IMR-90 (cell line): ENCODE measurements at regions of chr13 and their contacts with region 1.

Region 1: GRCh38 chr13:85799097-85799582 is at the start of gene SLITRK6:
- DNase-seq: peak; percentile 85
- ATAC-seq: peak; percentile 99
- H3K4me3 ChIP-seq: peak within 1 kb of the TSS; percentile 41
- H3K27ac ChIP-seq: no peak within 1 kb of the TSS
- H3K4me1 ChIP-seq: no peaks in the 10 kb centered on the region
- H3K27me3 ChIP-seq: no peaks in the 10 kb centered on the region
- CTCF ChIP-seq: peak; percentile 38; the same call in 1 of the 2 replicates
- POLR2A ChIP-seq: no peak
- RAD21 ChIP-seq: peak; percentile 41; the same call in 1 of the 2 replicates
- total RNA-seq, gene SLITRK6: 1.6 and 1.7 TPM in 2 replicates

Region 2: DNA sequence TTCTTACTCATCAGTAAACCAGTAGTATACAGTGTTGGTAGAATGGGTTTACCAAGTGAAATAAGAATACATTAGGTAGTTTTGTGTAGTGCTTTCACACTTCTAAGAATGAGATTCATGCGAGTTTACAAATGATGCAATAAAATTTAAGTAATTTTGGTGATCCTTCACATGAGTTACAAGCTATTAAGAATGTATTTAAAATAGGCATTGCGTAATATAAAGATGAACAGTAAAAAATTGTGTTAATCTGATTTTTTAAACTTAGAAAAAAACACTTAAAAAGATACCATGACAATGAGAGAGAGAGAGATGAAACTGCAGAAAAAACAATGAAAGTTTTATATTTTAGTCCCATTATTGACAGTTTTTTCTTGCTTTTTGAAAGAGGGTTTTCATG is 570.4 kb before region 1 on chr13:
- CTCF ChIA-PET with region 1: no interaction called
- POLR2A ChIA-PET with region 1: no interaction called
- dilution Hi-C with region 1: no loop called
- in situ Hi-C with region 1: no loop called
- intact Hi-C with region 1: loop called (anchors 5 kb)
- DNase-seq: no peak
- ATAC-seq: no peak
- H3K4me3 ChIP-seq: no peak overlapping the region
- H3K27ac ChIP-seq: no peak overlapping the region
- H3K4me1 ChIP-seq: no peaks in the 10 kb centered on the region; the same call in 1 of the 2 replicates
- H3K27me3 ChIP-seq: no peaks in the 10 kb centered on the region
- CTCF ChIP-seq: no peak
- POLR2A ChIP-seq: no peak
- RAD21 ChIP-seq: no peak

Region 3: DNA sequence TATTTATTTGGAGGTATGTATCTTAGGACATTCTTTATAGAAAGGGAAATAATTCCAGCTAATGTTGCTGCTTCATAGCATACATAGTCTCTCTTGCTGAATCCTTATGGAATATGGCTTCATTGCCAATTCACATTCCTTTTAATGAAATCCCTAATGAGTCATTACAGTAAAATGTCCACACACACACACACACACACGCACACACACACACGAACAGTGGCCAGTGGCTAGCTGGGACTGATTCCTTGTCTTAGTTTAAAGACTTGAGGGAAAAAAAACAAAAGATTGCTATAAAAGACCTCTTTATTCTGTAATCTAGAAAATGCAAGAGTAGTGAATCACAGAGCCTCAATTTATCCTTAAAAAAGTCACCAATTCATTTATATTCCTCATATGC is 301.5 kb before region 1 on chr13:
- CTCF ChIA-PET with region 1: no interaction called
- POLR2A ChIA-PET with region 1: no interaction called
- dilution Hi-C with region 1: no loop called
- in situ Hi-C with region 1: no loop called
- intact Hi-C with region 1: loop called (anchors 5 kb)
- DNase-seq: peak; percentile 97
- ATAC-seq: peak; percentile 93
- H3K4me3 ChIP-seq: no peak overlapping the region
- H3K27ac ChIP-seq: peak overlapping the region; percentile 75; the same call in 1 of the 2 replicates
- H3K4me1 ChIP-seq: 0 out of 2 replicates have a peak, but pooled peaks cover 2% of the 10 kb centered on the region
- H3K27me3 ChIP-seq: no peaks in the 10 kb centered on the region
- CTCF ChIP-seq: no peak
- POLR2A ChIP-seq: no peak
- RAD21 ChIP-seq: no peak; the same call in 1 of the 2 replicates

Region 4: DNA sequence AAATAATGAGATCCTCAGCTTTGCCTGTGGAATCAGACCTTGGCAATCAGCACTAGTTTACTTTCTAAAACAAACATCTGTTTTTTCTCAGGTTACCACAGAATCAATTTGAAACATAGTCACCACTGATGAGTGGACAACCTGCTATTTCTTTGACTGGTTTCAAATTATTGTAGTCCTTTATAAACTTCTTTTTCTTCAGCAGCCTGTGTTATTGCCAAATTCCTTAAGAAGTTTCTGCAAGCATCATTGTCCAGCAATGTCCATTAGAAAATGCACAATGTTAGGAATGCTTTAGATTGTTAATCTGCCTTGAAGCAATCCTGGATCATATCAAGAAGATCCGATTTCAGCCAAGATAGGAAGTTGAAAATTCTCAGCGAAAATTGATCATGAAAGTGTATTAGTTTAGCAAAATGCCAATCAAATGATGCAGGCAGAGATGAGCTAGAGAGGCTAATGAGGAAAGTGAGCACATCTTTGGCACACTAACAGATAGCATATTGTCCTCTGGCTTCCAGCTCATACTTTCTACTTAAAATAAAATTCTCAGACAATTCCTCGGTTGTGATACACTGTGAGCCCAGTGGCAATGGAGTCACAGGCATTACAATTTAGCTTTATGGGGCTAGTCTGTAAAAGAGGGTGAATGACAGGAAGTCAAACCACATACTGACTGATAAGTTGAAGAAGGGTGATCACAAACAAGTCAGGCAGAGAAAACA is 270.5 kb before region 1 on chr13:
- CTCF ChIA-PET with region 1: no interaction called
- POLR2A ChIA-PET with region 1: no interaction called
- dilution Hi-C with region 1: no loop called
- in situ Hi-C with region 1: no loop called
- intact Hi-C with region 1: loop called (anchors 5 kb)
- DNase-seq: peak; percentile 90
- ATAC-seq: peak; percentile 86
- H3K4me3 ChIP-seq: peak overlapping the region; percentile 24; the same call in 1 of the 2 replicates
- H3K27ac ChIP-seq: peak overlapping the region; percentile 35
- H3K4me1 ChIP-seq: peaks cover 6% of the 10 kb centered on the region
- H3K27me3 ChIP-seq: no peaks in the 10 kb centered on the region
- CTCF ChIP-seq: no peak
- POLR2A ChIP-seq: no peak
- RAD21 ChIP-seq: no peak

Region 5: GRCh38 chr13:85616275-85616674 is 182.9 kb before region 1 on chr13:
- CTCF ChIA-PET with region 1: no interaction called
- POLR2A ChIA-PET with region 1: no interaction called
- dilution Hi-C with region 1: no loop called
- in situ Hi-C with region 1: no loop called
- intact Hi-C with region 1: loop called (anchors 10 kb)
- DNase-seq: peak; percentile 57
- ATAC-seq: peak; percentile 35; the same call in 1 of the 2 replicates
- H3K4me3 ChIP-seq: no peak overlapping the region
- H3K27ac ChIP-seq: no peak overlapping the region; the same call in 1 of the 2 replicates
- H3K4me1 ChIP-seq: no peaks in the 10 kb centered on the region; the same call in 1 of the 2 replicates
- H3K27me3 ChIP-seq: no peaks in the 10 kb centered on the region
- CTCF ChIP-seq: no peak
- POLR2A ChIP-seq: no peak
- RAD21 ChIP-seq: no peak